Endothelial cell of umbilical vein (primary cell): ENCODE measurements at regions of chr13 and their contacts with region 1.

Region 1: GRCh38 chr13:97109841-97110492 is 112.2 kb upstream of the MBNL2 start:
- DNase-seq: peak; percentile 93
- H3K4me3 ChIP-seq: no peak overlapping the region
- H3K27ac ChIP-seq: no peak overlapping the region
- H3K4me1 ChIP-seq: peaks cover 17% of the 10 kb centered on the region
- H3K27me3 ChIP-seq: no peaks in the 10 kb centered on the region
- CTCF ChIP-seq: peak; percentile 96 to 99
- POLR2A ChIP-seq: no peak

Region 2: GRCh38 chr13:96835546-96835945 is 274.4 kb before region 1 on chr13:
- CTCF ChIA-PET with region 1: no interaction called
- POLR2A ChIA-PET with region 1: no interaction called
- dilution Hi-C with region 1: no loop called
- intact Hi-C with region 1: no loop called
- DNase-seq: no peak
- H3K4me3 ChIP-seq: no peak overlapping the region
- H3K27ac ChIP-seq: no peak overlapping the region
- H3K4me1 ChIP-seq: no peaks in the 10 kb centered on the region
- H3K27me3 ChIP-seq: no peaks in the 10 kb centered on the region
- CTCF ChIP-seq: no peak
- POLR2A ChIP-seq: no peak

Region 3: GRCh38 chr13:97030705-97031452 is 79.1 kb before region 1 on chr13:
- CTCF ChIA-PET with region 1: interaction called, 4 read pairs
- POLR2A ChIA-PET with region 1: no interaction called
- dilution Hi-C with region 1: no loop called
- intact Hi-C with region 1: loop called (anchors 1 kb)
- DNase-seq: peak; percentile 76
- H3K4me3 ChIP-seq: no peak overlapping the region
- H3K27ac ChIP-seq: no peak overlapping the region
- H3K4me1 ChIP-seq: peaks cover 19% of the 10 kb centered on the region
- H3K27me3 ChIP-seq: no peaks in the 10 kb centered on the region
- CTCF ChIP-seq: peak; percentile 29 to 33
- POLR2A ChIP-seq: no peak

Region 4: GRCh38 chr13:97205982-97206381 is 96.0 kb after region 1 on chr13:
- CTCF ChIA-PET with region 1: interaction called, 256 read pairs
- POLR2A ChIA-PET with region 1: no interaction called
- dilution Hi-C with region 1: loop called (anchors 25 kb)
- intact Hi-C with region 1: no loop called
- DNase-seq: peak; percentile 26
- H3K4me3 ChIP-seq: no peak overlapping the region
- H3K27ac ChIP-seq: no peak overlapping the region
- H3K4me1 ChIP-seq: peaks cover 8% of the 10 kb centered on the region
- H3K27me3 ChIP-seq: no peaks in the 10 kb centered on the region
- CTCF ChIP-seq: no peak
- POLR2A ChIP-seq: no peak

Region 5: DNA sequence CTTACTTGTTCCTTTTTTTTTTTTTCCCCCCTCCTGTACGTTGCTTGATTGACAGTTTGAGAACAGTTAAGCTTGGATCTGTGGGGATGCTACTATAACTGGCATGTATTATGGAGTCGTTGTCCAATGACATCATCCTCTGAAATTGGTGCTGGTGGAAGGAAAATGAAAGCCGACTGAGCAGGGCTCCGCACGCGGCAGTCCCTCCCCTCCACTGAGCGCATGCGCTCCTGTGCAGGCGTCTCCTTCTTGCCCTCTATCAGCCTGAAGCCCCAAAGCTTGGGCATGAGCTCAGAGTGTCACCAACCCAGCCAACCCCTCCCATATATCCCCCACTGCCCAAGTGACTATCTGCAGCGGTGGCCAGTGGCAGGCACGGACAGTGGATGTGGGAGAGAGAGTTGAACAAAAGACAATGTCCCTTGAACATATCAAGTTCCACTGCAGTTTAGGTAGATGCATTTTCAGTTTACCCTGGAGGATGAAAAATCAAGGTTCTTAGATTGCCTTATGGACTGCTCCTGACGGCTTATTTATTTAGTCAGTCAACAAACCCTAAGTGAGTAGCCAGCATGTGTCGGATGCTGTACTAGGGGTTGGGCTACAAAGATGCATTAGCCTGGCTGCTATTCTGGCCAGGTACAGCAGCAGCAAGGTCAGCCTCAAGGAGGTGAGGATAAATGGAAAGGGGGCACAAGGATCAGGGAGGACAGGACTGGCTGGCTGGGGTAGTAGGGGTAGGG is 133.0 kb after region 1 on chr13:
- CTCF ChIA-PET with region 1: interaction called, 34 read pairs
- POLR2A ChIA-PET with region 1: no interaction called
- dilution Hi-C with region 1: no loop called
- intact Hi-C with region 1: no loop called
- DNase-seq: peak; percentile 43
- H3K4me3 ChIP-seq: no peak overlapping the region
- H3K27ac ChIP-seq: peak overlapping the region; percentile 79
- H3K4me1 ChIP-seq: peaks cover 93% of the 10 kb centered on the region
- H3K27me3 ChIP-seq: no peaks in the 10 kb centered on the region
- CTCF ChIP-seq: no peak
- POLR2A ChIP-seq: no peak

Region 6: DNA sequence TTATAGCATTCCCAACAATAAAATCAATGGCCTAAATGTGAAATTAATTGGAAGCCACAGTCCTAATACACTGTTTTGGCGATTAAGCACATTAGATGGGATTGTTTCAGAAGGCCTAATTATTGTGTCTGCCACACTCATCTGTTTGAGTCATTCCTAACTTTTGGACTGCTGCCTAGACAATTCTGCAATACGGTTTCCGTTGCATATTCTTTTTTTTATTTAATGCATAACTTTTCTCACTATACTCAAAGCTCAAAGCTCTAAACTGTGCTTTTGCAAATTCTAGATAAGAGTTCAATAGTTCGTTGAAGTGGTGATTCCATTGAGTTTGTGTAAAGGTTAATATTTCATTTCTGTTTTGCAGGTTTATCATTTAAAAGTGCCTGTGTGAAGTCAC is 165.3 kb after region 1 on chr13:
- CTCF ChIA-PET with region 1: interaction called, 20 read pairs
- POLR2A ChIA-PET with region 1: no interaction called
- dilution Hi-C with region 1: no loop called
- intact Hi-C with region 1: no loop called
- DNase-seq: peak; percentile 93
- H3K4me3 ChIP-seq: no peak overlapping the region
- H3K27ac ChIP-seq: peak overlapping the region; percentile 82
- H3K4me1 ChIP-seq: peaks cover 75% of the 10 kb centered on the region
- H3K27me3 ChIP-seq: no peaks in the 10 kb centered on the region
- CTCF ChIP-seq: no peak
- POLR2A ChIP-seq: peak; percentile 31

Region 7: DNA sequence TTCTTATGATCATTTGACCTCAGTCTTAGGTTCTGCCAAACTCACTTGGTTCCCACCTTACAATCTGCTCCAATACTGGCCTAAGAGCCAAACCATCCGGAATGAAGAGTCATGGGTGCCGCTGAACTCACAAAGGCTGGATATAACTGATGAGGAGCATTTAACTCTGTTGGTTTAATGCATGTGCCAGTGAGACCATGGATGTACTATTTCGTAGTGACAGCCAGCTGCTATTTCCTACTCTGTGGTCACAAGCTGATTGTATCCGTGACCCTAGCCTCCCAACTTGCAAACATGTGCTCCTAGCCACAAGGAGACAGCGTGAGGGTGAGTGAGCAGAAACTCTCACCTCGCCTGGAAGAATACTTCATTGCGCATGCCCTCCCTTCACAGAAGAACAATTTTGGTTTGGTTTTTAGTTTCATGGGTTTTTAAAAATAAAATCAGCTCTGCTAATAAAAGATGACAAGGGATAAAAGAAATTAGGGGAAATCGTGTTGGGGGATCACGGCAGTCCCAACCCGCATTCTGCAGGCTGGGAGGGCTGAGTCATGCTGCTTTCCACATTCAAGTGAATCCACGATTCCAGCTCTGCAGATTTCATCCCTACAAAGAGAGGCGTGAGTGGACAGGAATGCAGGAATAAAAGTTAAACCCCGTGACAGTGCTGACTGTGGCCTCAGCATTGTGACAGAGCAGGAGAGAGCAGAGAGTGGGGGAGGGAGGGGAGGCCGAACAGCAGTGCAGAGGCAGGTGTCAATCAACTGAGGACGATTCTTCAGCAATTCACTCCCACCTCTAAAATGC is 257.3 kb after region 1 on chr13:
- CTCF ChIA-PET with region 1: interaction called, 31 read pairs
- POLR2A ChIA-PET with region 1: no interaction called
- dilution Hi-C with region 1: no loop called
- intact Hi-C with region 1: no loop called
- DNase-seq: no peak
- H3K4me3 ChIP-seq: no peak overlapping the region
- H3K27ac ChIP-seq: no peak overlapping the region
- H3K4me1 ChIP-seq: peaks cover 6% of the 10 kb centered on the region
- H3K27me3 ChIP-seq: no peaks in the 10 kb centered on the region
- CTCF ChIP-seq: no peak
- POLR2A ChIP-seq: no peak